ENCODE measurements at regions of chr6 and their contacts with region 1.

Region 1: GRCh38 chr6:122471107-122472021 is at the start of gene SERINC1:
- DNase-seq: peak; percentile 90 to 97 (median 95)

Region 2: DNA sequence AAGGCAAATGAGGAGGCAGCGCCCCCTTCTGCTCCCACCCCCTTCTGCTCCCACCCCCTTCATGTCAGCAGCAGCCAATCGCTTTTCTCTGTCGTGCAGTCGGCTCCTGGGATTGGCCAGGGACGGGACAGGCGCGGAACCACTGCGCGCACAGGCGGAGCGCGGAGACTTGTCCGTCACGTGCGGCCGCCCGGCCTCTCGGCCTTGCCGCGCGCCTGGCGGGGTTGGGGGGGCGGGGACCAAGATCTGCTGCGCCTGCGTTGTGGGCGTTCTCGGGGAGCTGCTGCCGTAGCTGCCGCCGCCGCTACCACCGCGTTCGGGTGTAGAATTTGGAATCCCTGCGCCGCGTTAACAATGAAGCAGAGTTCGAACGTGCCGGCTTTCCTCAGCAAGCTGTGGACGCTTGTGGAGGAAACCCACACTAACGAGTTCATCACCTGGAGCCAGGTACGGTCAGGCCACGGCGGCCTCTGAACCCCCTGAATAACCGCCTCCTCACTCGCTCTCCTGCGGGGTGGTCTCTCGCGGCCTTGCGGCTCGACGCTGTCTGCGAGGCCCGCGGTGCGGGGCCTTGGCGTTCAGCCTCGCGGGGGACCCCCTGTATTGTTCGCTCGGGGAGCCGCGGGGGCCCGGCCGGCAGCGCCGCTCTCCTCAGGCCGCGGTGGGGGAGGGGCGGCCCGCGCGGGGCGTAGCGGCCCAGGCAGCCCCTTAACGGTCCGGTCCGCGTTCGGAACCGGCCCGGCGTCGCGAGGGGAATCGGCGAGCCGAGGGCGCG is 71.8 kb before region 1 on chr6 and contains the start of gene HSF2:
- intact Hi-C with region 1: loop called (anchors 5 kb)
- DNase-seq: peak; percentile 95 to 99 (median 98)

Region 3: GRCh38 chr6:123233336-123233735 is 762.0 kb after region 1 on chr6:
- intact Hi-C with region 1: no loop called
- DNase-seq: no peak

Measured in head of caudate nucleus (tissue), 42 donors.